GM12878 (cell line): ENCODE measurements at regions of chr11 and their contacts with region 1.

Region 1: GRCh38 chr11:107043242-107044006 is 25.1 kb upstream of the GUCY1A2 start:
- DNase-seq: peak; percentile 71
- ATAC-seq: peak; percentile 92
- H3K4me3 ChIP-seq: no peak overlapping the region
- H3K27ac ChIP-seq: no peak overlapping the region; the same call in 1 of the 2 replicates
- H3K4me1 ChIP-seq: peaks cover 9% of the 10 kb centered on the region
- H3K27me3 ChIP-seq: no peaks in the 10 kb centered on the region
- CTCF ChIP-seq: no peak
- EP300 ChIP-seq: peak; percentile 79 to 84
- POLR2A ChIP-seq: no peak
- RAD21 ChIP-seq: no peak; the same call in 1 of the 2 replicates

Region 2: DNA sequence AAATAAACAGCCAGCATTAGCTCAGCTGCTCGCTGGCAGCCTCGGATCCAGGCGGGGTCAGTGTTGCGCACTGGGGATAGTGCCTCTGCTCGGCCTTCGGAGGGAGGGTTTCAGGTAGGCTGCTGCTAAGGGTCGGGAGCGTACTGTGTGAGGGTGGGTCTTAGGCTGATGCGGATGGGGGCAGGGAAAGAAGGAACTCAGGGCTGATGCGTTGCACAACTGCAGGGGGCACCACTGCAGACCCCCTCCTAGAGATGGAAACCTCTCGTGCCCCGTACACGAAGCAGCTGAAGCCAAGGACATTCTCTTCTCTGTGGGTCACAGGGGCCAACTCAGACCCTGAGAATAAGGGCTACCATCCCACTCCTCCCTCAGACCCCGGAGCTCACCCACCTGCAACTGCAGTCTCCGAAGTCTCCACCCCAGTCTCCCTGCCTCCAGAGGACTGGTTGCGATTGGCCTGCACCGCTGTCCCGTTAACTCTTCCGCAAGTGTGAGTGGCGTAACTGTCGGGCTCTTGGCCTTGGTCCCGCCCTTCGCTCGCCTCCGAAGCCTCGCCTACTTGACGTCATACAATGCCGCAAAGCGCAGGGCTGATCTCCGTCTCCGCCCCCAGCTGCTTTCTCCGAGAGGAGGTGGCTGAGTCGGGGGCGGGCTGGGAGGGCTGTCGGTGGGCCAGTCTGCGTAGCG is 966.4 kb before region 1 on chr11 and contains the start of gene KBTBD3:
- CTCF ChIA-PET with region 1: no interaction called
- POLR2A ChIA-PET with region 1: no interaction called
- RAD21 ChIA-PET with region 1: no interaction called
- SMC1A ChIA-PET with region 1: no interaction called
- in situ Hi-C with region 1: loop called (anchors 10 kb)
- intact Hi-C with region 1: loop called (anchors 5 kb)
- DNase-seq: peak; percentile 99
- ATAC-seq: peak; percentile 95
- H3K4me3 ChIP-seq: peak within 1 kb of the TSS; percentile 94
- H3K27ac ChIP-seq: peak within 1 kb of the TSS; percentile 95
- H3K4me1 ChIP-seq: peaks cover 8% of the 10 kb centered on the region
- H3K27me3 ChIP-seq: no peaks in the 10 kb centered on the region
- CTCF ChIP-seq: peak; percentile 47 to 52 (median 52)
- EP300 ChIP-seq: no peak
- POLR2A ChIP-seq: peak; percentile 81
- RAD21 ChIP-seq: no peak
- polyA plus RNA-seq, gene KBTBD3: 15.4 to 18.1 TPM

Region 3: DNA sequence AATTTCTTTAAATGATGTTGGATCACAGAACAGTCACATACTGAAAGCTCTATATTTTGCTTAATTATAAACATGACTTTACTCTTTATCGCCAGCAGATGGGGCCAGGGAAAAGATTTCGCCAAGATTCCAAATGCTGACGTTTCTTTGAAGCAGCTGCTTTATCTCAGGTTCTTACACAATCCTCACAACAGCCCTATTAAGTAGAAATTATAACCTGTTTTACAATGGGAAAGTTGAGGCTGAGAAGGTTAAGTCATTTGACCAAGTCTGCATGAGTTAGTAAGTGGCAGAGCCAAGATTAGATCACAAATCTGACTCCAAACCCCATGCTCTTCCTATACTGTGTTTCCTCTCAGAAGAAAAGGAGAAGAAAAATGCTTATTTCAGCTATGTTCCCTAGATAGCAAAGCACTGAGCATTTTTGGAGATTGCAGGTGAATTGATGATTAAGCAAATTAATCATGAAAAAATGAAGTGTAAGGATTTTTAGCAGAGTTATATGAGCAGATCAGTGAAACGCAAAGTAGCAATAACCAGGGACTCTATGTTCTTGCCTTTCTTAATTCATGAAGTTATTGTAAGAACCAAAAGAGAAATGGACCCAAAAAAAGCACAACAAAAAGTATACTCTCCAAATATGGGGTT is 887.0 kb before region 1 on chr11:
- CTCF ChIA-PET with region 1: no interaction called
- POLR2A ChIA-PET with region 1: no interaction called
- RAD21 ChIA-PET with region 1: no interaction called
- SMC1A ChIA-PET with region 1: interaction called, 3 read pairs
- in situ Hi-C with region 1: loop called (anchors 25 kb)
- intact Hi-C with region 1: no loop called
- DNase-seq: peak; percentile 12
- ATAC-seq: peak; percentile 80
- H3K4me3 ChIP-seq: no peak overlapping the region
- H3K27ac ChIP-seq: no peak overlapping the region
- H3K4me1 ChIP-seq: no peaks in the 10 kb centered on the region
- H3K27me3 ChIP-seq: no peaks in the 10 kb centered on the region
- CTCF ChIP-seq: peak; percentile 30 to 48 (median 43); a peak in 5 of 6 replicates
- EP300 ChIP-seq: no peak
- POLR2A ChIP-seq: no peak
- RAD21 ChIP-seq: peak; percentile 53

Region 4: DNA sequence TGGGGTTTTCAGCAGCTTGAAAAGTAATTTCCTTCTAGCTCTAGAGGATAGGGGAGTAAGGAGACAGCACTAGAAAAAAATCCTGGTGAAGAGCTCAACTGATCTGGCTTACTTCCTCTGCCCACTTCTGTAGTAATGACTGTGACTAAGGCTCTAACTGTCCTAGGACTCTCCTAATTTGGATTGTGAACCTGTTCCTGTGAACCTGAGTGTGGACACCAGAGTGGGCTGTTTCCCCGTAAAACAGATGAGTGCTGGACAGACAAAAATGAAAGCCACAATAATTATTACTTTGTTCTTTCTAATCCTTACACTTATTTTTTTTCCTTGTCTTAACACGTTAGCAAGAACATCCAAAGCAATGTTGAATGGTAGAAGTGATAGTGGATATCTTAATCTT is 811.8 kb before region 1 on chr11:
- CTCF ChIA-PET with region 1: no interaction called
- POLR2A ChIA-PET with region 1: no interaction called
- RAD21 ChIA-PET with region 1: no interaction called
- SMC1A ChIA-PET with region 1: no interaction called
- in situ Hi-C with region 1: no loop called
- intact Hi-C with region 1: loop called (anchors 10 kb)
- DNase-seq: no peak
- ATAC-seq: peak; percentile 24; the same call in 2 of the 3 replicates
- H3K4me3 ChIP-seq: no peak overlapping the region
- H3K27ac ChIP-seq: no peak overlapping the region
- H3K4me1 ChIP-seq: no peaks in the 10 kb centered on the region
- H3K27me3 ChIP-seq: no peaks in the 10 kb centered on the region
- CTCF ChIP-seq: no peak
- EP300 ChIP-seq: no peak
- POLR2A ChIP-seq: no peak
- RAD21 ChIP-seq: no peak

Region 5: GRCh38 chr11:107438148-107438547 is 394.7 kb after region 1 on chr11:
- CTCF ChIA-PET with region 1: no interaction called
- POLR2A ChIA-PET with region 1: no interaction called
- RAD21 ChIA-PET with region 1: no interaction called
- SMC1A ChIA-PET with region 1: no interaction called
- in situ Hi-C with region 1: no loop called
- intact Hi-C with region 1: loop called (anchors 10 kb)
- DNase-seq: no peak
- ATAC-seq: no peak
- H3K4me3 ChIP-seq: no peak overlapping the region
- H3K27ac ChIP-seq: no peak overlapping the region
- H3K4me1 ChIP-seq: no peaks in the 10 kb centered on the region
- H3K27me3 ChIP-seq: no peaks in the 10 kb centered on the region
- CTCF ChIP-seq: no peak
- EP300 ChIP-seq: no peak
- POLR2A ChIP-seq: no peak
- RAD21 ChIP-seq: no peak